HEK293T (cell line): ENCODE measurements at regions of chr14 and their contacts with region 1.

Region 1: GRCh38 chr14:23006544-23007419 is 3.2 kb downstream of the C14orf93 start:
- DNase-seq: peak; percentile 96

Region 2: DNA sequence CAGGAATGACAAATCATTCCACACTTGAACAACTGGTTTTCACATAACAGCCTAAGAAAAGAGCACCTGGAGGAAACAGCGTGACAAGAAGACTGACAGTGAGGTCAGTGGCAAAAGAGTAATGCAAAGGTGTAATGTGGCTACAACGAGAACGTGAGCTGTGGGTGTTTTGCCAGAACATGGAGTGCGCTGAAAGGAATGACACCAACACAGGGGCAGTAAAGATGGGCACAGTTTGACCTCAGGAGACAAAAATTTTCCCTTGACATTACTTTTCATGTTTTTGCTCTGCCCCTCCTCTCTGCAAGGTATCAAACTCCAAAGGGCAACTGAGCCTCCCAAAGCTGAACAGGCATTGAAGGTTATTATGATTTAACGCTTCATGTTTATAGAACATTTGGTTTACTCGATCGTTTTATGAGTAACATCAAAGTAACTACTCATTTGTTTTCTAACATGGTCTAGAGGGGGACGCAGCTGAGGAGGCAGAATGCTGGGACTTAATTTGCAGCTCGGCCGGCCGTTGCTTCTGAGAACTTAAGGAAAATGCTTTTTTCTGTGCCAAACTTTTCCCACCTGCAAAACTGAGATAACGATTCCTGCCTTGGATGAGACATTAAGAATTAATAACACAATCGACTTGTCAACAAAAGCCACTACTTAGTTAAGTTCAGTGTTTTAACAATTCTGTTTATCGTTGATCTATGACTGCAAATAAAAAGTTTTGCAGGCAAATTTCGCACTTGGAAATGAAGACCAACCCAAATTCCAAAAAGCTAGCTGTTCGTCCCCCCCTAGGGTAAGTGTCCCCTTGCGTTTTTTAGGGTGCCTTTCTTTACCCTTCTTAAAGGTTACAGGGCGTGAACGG is 50.8 kb before region 1 on chr14:
- CTCF ChIA-PET with region 1: no interaction called
- POLR2A ChIA-PET with region 1: interaction called, 25 read pairs
- DNase-seq: no peak

Region 3: DNA sequence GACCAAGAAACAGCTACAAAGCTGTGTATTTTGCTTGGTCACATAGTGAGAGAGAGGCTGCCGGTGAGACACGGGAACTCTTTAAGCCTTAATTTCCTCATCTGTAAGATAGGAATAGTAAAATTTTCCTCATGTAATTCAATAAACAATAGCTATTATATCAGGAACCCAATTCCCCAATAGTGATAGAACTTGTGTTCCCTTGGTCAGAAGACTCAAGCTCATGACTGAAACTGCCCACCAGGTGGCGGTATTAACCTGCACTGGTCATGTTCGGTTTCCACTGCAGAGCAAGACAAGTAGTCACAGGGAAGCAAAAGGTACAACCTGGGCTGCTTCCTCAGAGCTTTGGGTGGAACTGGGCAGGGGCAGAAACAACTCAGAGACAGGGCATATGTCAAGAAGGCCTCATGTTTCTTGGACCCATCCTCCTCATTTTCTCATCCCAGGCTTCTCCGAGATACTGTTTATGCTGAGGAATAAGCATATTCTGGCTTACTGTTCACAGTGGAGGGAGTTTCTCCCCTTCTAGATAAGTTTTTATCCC is 20.2 kb before region 1 on chr14:
- CTCF ChIA-PET with region 1: interaction called, 28 read pairs
- POLR2A ChIA-PET with region 1: interaction called, 24 read pairs
- DNase-seq: peak; percentile 79

Region 4: DNA sequence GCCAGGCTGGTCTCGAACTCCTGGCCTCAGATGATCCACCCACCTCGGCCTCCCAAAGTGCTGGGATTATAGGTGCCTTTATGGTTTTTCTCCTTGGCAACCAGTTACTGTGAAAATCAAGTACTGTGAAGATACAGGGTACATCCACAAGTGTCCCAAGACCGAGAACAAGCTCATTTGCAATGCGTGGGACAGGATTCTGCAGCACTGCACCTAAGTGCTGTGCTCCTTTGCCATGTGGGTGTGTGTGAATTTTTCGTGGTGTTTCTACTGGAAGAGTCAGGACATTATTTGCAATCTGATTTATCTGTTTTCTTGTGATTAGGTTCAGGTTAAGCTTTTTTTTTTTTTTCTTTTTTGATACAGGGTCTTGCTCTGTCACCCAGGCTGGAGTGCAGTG is 10.3 kb after region 1 on chr14:
- CTCF ChIA-PET with region 1: interaction called, 8 read pairs
- POLR2A ChIA-PET with region 1: interaction called, 36 read pairs
- DNase-seq: no peak

Region 5: GRCh38 chr14:23034483-23035302 is 27.9 kb after region 1 on chr14 and contains the start of gene PSMB5:
- CTCF ChIA-PET with region 1: no interaction called
- POLR2A ChIA-PET with region 1: interaction called, 20 read pairs
- DNase-seq: peak; percentile 92

Region 6: DNA sequence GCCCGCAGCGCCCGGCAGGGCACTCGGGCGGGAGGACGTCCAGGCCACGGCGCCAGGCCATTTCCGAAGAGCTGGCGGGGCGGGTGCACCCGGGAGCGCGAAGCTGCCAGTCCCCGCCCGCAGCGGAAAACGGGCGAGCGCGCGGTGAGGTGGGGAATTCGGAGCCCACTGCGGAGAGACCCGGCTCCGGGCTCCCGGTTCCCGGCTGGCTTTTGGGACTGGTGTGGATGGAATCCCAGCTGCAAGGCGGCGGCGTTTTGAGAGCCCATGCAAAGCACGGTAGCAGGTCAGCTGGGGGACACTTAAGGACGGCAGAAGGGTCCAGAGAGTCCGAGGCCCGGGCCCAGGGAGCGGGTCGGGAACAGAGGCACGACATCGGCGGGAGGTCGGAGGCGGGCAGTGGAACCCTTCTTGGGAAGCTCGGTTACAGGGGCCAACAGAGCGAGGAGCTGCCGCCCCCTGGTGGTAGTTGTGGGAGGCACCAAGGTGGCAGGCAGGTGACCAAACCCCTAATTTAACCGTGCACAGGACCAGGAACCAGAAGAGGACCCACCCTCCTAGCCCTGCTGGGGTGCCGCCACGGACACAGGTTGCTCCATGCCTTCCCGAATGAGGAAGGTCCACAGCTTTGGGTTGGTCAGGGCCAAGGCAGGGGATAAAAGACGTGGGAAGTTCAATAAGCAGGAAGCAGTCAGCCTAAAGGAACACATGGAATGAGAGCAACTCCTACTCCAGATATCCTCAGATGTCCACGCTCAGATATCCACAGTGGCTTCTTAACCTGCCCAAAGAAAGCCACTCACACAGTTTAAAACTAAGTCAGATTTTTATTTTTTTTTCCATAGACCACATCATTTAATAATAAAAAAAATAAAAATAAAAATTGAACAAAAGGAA is 51.2 kb after region 1 on chr14:
- CTCF ChIA-PET with region 1: interaction called, 15 read pairs
- POLR2A ChIA-PET with region 1: interaction called, 45 read pairs
- DNase-seq: peak; percentile 87